Testis (tissue), 5 donors: ENCODE measurements at regions of chr14 and their contacts with region 1.

Region 1: DNA sequence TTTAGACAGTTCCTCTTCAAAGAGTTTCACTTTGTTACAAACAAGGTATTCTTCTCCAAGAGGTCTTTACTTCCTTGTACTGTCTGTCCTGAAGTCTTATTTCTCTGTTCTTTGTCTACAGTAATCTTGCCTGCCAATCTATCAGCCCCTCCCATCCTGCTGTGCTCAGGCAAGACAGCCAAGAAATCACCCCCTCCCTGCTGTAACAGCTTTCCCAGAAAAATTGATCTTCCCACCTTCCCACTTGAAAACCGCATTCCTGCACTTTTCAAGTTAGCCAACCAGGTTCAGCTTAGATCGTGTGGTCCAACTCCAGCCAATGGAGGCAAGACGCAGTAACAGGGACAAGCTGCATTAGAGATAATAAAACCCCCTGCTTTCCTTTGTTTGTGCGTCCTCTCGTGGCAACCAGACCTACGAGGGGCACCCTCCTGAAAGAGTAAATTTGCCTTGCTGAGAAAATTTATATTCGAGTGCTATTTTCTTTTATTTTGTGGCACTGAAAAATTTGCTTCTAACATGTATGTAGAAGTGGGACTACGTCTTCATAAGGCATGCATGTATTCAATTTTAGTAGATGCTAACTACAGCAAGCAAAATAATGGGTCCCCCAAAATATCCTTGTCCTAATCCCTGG is 46.5 kb upstream of the ESR2 start:
- DNase-seq: no peak
- H3K4me3 ChIP-seq: no peak overlapping the region
- H3K27ac ChIP-seq: no peak overlapping the region
- H3K4me1 ChIP-seq: peaks cover 4% of the 10 kb centered on the region
- H3K27me3 ChIP-seq: no peaks in the 10 kb centered on the region
- CTCF ChIP-seq: no peak
- POLR2A ChIP-seq: no peak

Region 2: DNA sequence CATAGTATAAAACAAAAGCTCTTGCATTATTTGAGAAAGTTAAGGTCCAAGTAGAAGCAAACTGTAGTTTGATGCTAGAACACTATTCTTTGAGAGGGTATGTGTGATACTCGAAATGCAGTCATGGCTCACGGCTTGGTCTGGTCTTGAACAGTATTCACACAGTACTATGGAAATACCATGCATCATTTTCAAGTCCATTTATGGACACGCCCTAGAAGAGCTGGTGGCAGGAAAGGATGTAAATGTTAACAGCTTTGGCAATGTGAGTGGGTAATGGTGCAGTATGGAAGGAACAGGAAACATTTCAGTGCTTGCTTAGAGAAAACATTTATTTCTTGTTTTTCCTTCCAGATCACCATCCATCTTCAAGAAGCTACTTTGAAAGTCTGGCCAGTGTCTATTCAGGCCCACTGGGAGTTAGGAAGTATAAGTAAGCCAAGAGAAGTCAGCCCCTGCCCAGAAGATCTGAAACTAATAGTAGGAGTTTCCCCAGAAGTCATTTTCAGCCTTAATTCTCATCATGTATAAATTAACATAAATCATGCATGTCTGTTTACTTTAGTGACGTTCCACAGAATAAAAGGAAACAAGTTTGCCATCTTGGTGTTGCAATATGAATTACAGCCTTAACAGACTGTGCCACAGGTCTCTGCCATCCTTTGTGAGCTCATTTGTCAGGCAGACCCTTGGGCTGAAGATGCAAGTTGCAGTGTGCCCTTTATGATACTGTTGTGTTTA is 118.9 kb after region 1 on chr14:
- intact Hi-C with region 1: no loop called
- DNase-seq: no peak
- H3K4me3 ChIP-seq: no peak overlapping the region
- H3K27ac ChIP-seq: no peak overlapping the region
- H3K4me1 ChIP-seq: no peaks in the 10 kb centered on the region
- H3K27me3 ChIP-seq: no peaks in the 10 kb centered on the region
- CTCF ChIP-seq: no peak
- POLR2A ChIP-seq: no peak

Region 3: DNA sequence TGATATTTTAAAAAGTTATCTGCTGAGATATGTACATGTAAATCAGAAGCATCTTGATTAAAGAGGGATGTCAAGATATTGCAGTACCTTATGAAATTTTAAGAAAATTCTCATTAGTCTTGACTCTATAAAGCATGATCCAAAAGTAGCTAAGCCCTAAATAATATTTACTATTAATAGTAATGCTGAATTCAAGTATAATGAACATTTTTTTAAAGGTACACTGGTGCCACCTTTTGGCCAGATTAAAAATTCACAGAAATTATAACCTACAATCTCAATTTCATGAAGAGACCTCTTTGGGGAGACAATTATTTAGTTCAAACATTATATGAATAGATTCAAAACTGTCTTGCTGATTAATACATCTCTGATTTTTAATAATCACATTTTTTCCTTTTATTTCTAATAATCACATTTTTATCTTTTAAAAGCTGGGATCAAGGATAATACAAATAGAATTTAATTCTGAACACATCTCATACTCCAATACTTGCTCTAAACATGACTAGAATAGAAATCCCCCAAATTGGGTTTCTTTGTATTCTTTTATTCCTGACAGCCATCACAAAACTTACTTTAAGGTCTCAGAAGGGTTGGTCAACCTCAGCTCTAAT is 138.1 kb after region 1 on chr14:
- intact Hi-C with region 1: loop called (anchors 10 kb)
- DNase-seq: no peak
- H3K4me3 ChIP-seq: no peak overlapping the region
- H3K27ac ChIP-seq: no peak overlapping the region
- H3K4me1 ChIP-seq: no peaks in the 10 kb centered on the region
- H3K27me3 ChIP-seq: no peaks in the 10 kb centered on the region
- CTCF ChIP-seq: peak in 1 of 3 experiments; percentile 53
- POLR2A ChIP-seq: no peak